ENCODE measurements at regions of chr3 and their contacts with region 1.

Region 1: GRCh38 chr3:18134386-18135062 is 290.6 kb downstream of the SATB1 start:
- DNase-seq: peak; percentile 18 to 78
- H3K4me3 ChIP-seq: no peak overlapping the region
- H3K27ac ChIP-seq: peak overlapping the region; percentile 90
- H3K4me1 ChIP-seq: peaks cover 29% of the 10 kb centered on the region
- H3K27me3 ChIP-seq: no peaks in the 10 kb centered on the region
- CTCF ChIP-seq: no peak

Region 2: GRCh38 chr3:18098960-18099587 is 35.5 kb before region 1 on chr3:
- CTCF ChIA-PET with region 1: no interaction called
- POLR2A ChIA-PET with region 1: no interaction called
- intact Hi-C with region 1: loop called (anchors 2 kb)
- DNase-seq: peak; percentile 84 to 88
- H3K4me3 ChIP-seq: 0 out of 2 replicates have a peak overlapping the region, but pooled peaks have one; percentile 18
- H3K27ac ChIP-seq: peak overlapping the region; percentile 79
- H3K4me1 ChIP-seq: peaks cover 40% of the 10 kb centered on the region
- H3K27me3 ChIP-seq: no peaks in the 10 kb centered on the region
- CTCF ChIP-seq: no peak

Region 3: DNA sequence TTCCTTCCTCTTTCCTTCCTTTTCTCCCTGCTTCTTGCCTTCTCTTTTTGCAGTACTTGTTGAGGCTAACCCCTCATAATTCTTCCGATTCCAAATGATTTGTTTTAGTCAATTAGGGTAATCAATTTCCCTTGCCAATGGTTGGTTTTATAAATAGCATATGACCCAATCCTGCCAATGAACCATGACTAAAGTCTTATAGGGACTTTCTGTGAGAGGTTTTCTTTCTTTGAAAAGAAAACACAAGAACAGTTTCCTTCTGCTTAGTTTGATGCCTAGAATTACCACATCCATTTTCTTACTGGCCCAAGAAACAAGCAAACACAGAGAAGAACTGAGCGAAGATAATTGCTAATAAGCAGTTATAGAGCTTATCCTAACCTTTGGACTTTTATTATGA is 583.1 kb after region 1 on chr3:
- CTCF ChIA-PET with region 1: no interaction called
- POLR2A ChIA-PET with region 1: no interaction called
- intact Hi-C with region 1: no loop called
- DNase-seq: no peak
- H3K4me3 ChIP-seq: no peak overlapping the region
- H3K27ac ChIP-seq: no peak overlapping the region
- H3K4me1 ChIP-seq: no peaks in the 10 kb centered on the region
- H3K27me3 ChIP-seq: no peaks in the 10 kb centered on the region
- CTCF ChIP-seq: no peak

Measured in PC-9 (cell line).